HCT116 (cell line): ENCODE measurements at regions of chr2 and their contacts with region 1.

Region 1: DNA sequence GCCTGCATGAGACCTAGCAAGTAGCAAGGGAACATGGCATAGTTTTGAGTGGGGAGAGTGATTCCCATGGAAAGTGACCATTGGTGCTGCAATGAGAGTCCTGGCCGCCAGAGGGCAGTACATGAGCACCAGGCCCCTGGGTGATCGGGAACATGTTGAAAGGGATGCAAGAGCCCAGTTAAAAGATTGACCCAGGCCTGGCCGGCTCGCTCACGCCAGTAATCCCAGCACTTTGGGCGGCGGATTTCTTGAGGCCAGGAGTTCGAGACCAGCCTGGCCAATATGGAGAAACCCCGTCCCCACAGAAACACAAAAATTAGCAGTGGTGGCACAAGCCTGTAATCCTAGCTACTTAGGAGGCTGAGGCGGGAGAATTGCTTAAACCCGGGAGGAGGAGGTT is 22.2 kb downstream of the FAP start:
- DNase-seq: peak; percentile 66
- ATAC-seq: peak; percentile 98
- H3K4me3 ChIP-seq: no peak overlapping the region
- H3K27ac ChIP-seq: no peak overlapping the region
- H3K4me1 ChIP-seq: no peaks in the 10 kb centered on the region
- H3K27me3 ChIP-seq: no peaks in the 10 kb centered on the region
- CTCF ChIP-seq: peak; percentile 80 to 94 (median 92)
- POLR2A ChIP-seq: no peak
- RAD21 ChIP-seq: peak; percentile 82

Region 2: GRCh38 chr2:161844834-161845233 is 376.2 kb before region 1 on chr2:
- CTCF ChIA-PET with region 1: no interaction called
- POLR2A ChIA-PET with region 1: no interaction called
- RAD21 ChIA-PET with region 1: no interaction called
- intact Hi-C with region 1: no loop called
- DNase-seq: no peak
- ATAC-seq: no peak
- H3K4me3 ChIP-seq: no peak overlapping the region
- H3K27ac ChIP-seq: no peak overlapping the region
- H3K4me1 ChIP-seq: no peaks in the 10 kb centered on the region
- H3K27me3 ChIP-seq: no peaks in the 10 kb centered on the region
- CTCF ChIP-seq: no peak
- POLR2A ChIP-seq: no peak
- RAD21 ChIP-seq: no peak

Region 3: GRCh38 chr2:162153608-162154224 is 67.3 kb before region 1 on chr2:
- CTCF ChIA-PET with region 1: interaction called, 11 read pairs
- POLR2A ChIA-PET with region 1: no interaction called
- RAD21 ChIA-PET with region 1: no interaction called
- intact Hi-C with region 1: no loop called
- DNase-seq: peak; percentile 52
- ATAC-seq: peak; percentile 97
- H3K4me3 ChIP-seq: no peak overlapping the region
- H3K27ac ChIP-seq: no peak overlapping the region
- H3K4me1 ChIP-seq: no peaks in the 10 kb centered on the region
- H3K27me3 ChIP-seq: no peaks in the 10 kb centered on the region
- CTCF ChIP-seq: peak; percentile 76 to 87 (median 82)
- POLR2A ChIP-seq: no peak
- RAD21 ChIP-seq: peak; percentile 76

Region 4: DNA sequence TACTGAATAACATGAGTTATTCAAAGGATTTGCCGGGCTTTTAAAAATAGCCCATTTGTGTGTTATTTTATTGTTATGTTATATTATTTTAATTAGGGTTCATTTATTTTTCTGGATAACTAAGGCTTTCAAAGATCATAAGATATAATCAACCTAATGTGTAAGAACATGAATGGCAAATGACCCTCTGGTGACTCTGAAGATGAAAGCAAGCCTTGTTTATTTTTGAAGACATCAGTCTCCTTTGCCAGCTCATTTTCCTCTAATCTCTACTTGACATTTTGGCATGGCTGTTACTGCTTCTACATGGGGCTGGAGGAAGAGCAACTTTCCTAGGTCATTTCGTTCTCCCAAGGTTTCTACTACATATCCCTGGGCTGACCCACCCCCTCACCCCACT is 11.6 kb after region 1 on chr2:
- CTCF ChIA-PET with region 1: interaction called, 25 read pairs
- POLR2A ChIA-PET with region 1: interaction called, 3 read pairs
- RAD21 ChIA-PET with region 1: no interaction called
- intact Hi-C with region 1: no loop called
- DNase-seq: no peak
- ATAC-seq: no peak
- H3K4me3 ChIP-seq: no peak overlapping the region
- H3K27ac ChIP-seq: no peak overlapping the region
- H3K4me1 ChIP-seq: no peaks in the 10 kb centered on the region
- H3K27me3 ChIP-seq: no peaks in the 10 kb centered on the region
- CTCF ChIP-seq: no peak
- POLR2A ChIP-seq: no peak
- RAD21 ChIP-seq: no peak

Region 5: DNA sequence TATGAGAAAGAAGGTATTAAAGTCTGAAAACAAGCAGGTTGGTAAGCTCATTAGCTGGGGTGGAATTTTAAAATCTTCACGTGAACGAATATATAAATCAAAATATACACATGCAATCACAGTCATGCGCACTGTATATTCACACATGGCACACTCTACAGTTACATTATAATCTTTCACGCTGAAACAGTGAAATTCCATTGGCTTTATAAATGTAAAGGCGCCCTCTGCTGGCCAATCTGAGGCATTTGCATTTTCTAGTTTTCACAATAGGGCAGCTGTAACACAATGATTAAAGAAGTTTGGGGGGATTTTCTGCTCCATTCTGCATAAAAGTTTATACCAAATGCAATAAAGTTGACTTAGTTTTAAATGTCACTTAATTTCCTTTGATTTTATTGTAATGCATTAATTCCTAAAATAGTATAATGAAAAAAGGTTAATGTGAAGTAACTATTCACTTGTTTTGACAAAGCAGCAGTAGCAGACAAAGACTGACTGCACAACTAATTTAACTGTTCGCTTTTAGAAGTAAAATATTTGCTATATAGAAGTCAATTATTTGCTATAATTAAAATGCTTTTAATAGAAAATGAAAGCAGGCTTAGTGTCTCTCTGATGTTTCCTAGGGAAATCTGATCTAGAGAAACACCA is 80.2 kb after region 1 on chr2:
- CTCF ChIA-PET with region 1: interaction called, 92 read pairs
- POLR2A ChIA-PET with region 1: interaction called, 4 read pairs
- RAD21 ChIA-PET with region 1: interaction called, 3 to 5 read pairs
- intact Hi-C with region 1: loop called (anchors 1 kb)
- DNase-seq: peak; percentile 41
- ATAC-seq: peak; percentile 83
- H3K4me3 ChIP-seq: no peak overlapping the region
- H3K27ac ChIP-seq: no peak overlapping the region
- H3K4me1 ChIP-seq: no peaks in the 10 kb centered on the region
- H3K27me3 ChIP-seq: no peaks in the 10 kb centered on the region
- CTCF ChIP-seq: peak; percentile 64 to 91 (median 65); a peak in 5 of 6 replicates
- POLR2A ChIP-seq: no peak
- RAD21 ChIP-seq: peak; percentile 71